ENCODE measurements at regions of chr12 and their contacts with region 1.

Region 1: GRCh38 chr12:107884769-107885694 is 110.5 kb downstream of the ASCL4 start:
- DNase-seq: peak; percentile 21 to 63
- ATAC-seq: peak; percentile 55 to 84 (median 60)
- H3K4me3 ChIP-seq: no peak overlapping the region
- H3K4me3 Mint-ChIP-seq: peak overlapping the region; percentile 29
- H3K27ac ChIP-seq: no peak overlapping the region
- H3K27ac Mint-ChIP-seq: no peak overlapping the region
- H3K4me1 ChIP-seq: peaks cover 5% of the 10 kb centered on the region
- H3K4me1 Mint-ChIP-seq: peaks cover 8 to 12% of the 10 kb centered on the region in 2 donors
- H3K27me3 ChIP-seq: no peaks in the 10 kb centered on the region
- H3K27me3 Mint-ChIP-seq: peaks cover 37 to 42% of the 10 kb centered on the region in 2 donors
- CTCF ChIP-seq: peak; percentile 62

Region 2: GRCh38 chr12:107522692-107523477 is 362.1 kb before region 1 on chr12:
- intact Hi-C with region 1: no loop called
- DNase-seq: no peak
- ATAC-seq: no peak
- H3K4me3 ChIP-seq: no peak overlapping the region
- H3K4me3 Mint-ChIP-seq: no peak overlapping the region
- H3K27ac ChIP-seq: no peak overlapping the region
- H3K27ac Mint-ChIP-seq: no peak overlapping the region
- H3K4me1 ChIP-seq: peaks cover 18% of the 10 kb centered on the region
- H3K4me1 Mint-ChIP-seq: peaks cover 17 to 27% of the 10 kb centered on the region in 2 donors
- H3K27me3 ChIP-seq: no peaks in the 10 kb centered on the region
- H3K27me3 Mint-ChIP-seq: no peaks in the 10 kb centered on the region
- CTCF ChIP-seq: no peak

Region 3: DNA sequence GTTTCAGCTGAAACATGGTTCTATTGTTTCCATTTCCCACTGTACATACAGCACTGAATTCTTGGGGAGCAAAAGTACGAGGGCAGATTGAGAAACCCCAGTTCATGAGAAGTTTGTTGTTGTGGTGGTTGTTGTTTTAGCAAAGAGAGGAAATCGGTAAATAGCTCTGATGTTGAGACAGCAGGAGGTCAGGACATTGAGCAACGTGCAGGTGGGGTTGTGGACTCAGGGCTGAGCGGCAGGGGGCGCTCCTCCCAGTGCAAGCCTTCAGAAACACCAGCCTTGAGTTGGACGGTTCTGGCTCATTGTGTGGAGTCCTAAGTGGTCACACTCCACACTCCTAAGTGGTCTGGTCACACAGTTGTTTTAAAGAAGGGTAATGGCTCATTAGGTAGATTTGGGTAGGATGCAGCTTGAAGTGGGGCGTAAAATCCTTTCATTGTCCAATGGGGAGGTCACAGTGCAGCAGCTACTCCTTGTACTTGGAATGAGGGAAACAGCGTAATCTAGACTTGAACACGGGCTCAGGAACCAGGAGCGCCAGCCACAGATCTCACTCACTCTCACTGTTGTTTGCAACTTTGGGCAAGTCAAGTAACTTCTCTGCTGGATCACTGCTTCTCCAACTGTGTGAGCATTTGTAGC is 213.9 kb before region 1 on chr12:
- intact Hi-C with region 1: loop called (anchors 2 kb)
- DNase-seq: peak in 1 of 2 donors; percentile 57
- ATAC-seq: peak; percentile 64 to 72 (median 64)
- H3K4me3 ChIP-seq: no peak overlapping the region
- H3K4me3 Mint-ChIP-seq: no peak overlapping the region
- H3K27ac ChIP-seq: no peak overlapping the region
- H3K27ac Mint-ChIP-seq: no peak overlapping the region
- H3K4me1 ChIP-seq: no peaks in the 10 kb centered on the region
- H3K4me1 Mint-ChIP-seq: peaks cover 0 to 6% of the 10 kb centered on the region in 2 donors
- H3K27me3 ChIP-seq: no peaks in the 10 kb centered on the region
- H3K27me3 Mint-ChIP-seq: peaks cover 25 to 28% of the 10 kb centered on the region in 2 donors
- CTCF ChIP-seq: peak; percentile 49

Region 4: GRCh38 chr12:107679336-107679735 is 205.7 kb before region 1 on chr12:
- intact Hi-C with region 1: loop called (anchors 2 kb)
- DNase-seq: no peak
- ATAC-seq: no peak
- H3K4me3 ChIP-seq: no peak overlapping the region
- H3K4me3 Mint-ChIP-seq: no peak overlapping the region
- H3K27ac ChIP-seq: no peak overlapping the region
- H3K27ac Mint-ChIP-seq: no peak overlapping the region
- H3K4me1 ChIP-seq: no peaks in the 10 kb centered on the region
- H3K4me1 Mint-ChIP-seq: peaks cover under 1 to 9% of the 10 kb centered on the region in 2 donors
- H3K27me3 ChIP-seq: no peaks in the 10 kb centered on the region
- H3K27me3 Mint-ChIP-seq: peaks cover 17 to 18% of the 10 kb centered on the region in 2 donors
- CTCF ChIP-seq: no peak

Measured in natural killer cell (primary cell).